ENCODE measurements at regions of chr12 and their contacts with region 1.

Region 1: DNA sequence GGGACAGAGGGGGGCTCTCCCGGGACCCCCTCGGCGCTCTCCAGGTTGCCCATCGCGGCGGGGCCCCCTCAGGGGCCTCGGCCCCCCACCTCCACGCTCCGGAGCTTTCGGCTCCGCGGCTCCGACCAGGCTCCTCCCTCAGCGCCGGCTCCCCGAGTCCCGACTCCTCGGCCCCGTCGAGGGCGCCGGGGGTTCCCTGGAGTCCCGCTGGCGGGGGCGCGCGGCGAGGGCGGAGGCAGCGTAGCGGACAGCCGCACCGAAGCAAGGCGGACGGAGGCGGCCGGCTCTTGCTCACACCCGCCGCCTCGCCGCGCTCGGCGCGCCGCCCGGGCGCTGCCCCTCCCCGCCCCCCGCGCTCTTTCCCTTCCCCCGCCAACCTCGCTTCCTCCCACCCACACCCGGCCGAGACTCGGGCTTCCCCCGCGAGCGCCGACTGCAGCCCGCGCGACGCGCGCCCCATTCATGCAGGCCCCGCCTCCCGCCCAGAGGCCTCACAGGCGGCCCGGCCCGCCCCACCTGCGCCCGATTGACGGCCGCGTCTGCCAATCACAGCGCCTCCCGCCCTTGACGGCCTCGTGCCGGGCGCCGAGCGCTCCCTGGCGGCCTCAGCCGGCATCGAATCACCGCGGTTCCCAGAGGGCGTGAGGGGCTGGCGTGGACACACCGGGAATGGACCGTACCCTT is at the start of gene FMNL3:
- DNase-seq: peak; percentile 95 to 100 (median 98)

Region 2: GRCh38 chr12:49644620-49644994 is 62.7 kb before region 1 on chr12:
- intact Hi-C with region 1: loop called (anchors 1 kb)
- DNase-seq: peak; percentile 64 to 97 (median 84)

Region 3: DNA sequence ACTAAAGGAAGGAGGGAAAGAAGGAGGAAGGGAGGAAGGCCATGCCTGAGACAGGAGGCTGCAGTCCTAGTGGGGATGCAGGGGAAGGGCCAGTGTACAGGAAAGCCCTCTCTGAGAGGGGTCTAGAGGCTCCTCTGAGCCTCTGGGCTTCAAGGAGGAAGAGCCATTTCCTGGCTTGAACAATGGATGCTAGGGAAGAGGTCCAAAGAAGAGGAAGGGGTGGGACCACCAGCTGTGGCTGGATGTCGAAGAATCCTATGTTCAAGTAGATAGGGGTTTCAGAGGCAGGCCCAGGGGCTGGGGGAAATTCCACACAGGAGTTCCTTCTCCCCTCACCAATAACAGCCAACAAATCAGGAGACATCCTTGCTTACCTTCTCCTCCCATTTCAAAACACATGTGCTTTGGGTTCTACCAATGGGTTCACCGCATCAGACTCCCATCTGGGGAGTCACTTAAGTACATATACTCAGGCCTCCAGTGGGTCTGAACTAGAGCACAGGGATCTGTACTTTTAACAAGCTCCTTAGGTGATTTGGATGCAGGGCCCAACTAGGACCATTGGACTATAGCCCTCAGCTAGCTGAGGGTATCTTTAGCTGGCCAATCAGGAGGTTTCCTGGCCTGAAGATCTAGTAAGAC is 51.6 kb before region 1 on chr12:
- intact Hi-C with region 1: no loop called
- DNase-seq: no peak

Region 4: DNA sequence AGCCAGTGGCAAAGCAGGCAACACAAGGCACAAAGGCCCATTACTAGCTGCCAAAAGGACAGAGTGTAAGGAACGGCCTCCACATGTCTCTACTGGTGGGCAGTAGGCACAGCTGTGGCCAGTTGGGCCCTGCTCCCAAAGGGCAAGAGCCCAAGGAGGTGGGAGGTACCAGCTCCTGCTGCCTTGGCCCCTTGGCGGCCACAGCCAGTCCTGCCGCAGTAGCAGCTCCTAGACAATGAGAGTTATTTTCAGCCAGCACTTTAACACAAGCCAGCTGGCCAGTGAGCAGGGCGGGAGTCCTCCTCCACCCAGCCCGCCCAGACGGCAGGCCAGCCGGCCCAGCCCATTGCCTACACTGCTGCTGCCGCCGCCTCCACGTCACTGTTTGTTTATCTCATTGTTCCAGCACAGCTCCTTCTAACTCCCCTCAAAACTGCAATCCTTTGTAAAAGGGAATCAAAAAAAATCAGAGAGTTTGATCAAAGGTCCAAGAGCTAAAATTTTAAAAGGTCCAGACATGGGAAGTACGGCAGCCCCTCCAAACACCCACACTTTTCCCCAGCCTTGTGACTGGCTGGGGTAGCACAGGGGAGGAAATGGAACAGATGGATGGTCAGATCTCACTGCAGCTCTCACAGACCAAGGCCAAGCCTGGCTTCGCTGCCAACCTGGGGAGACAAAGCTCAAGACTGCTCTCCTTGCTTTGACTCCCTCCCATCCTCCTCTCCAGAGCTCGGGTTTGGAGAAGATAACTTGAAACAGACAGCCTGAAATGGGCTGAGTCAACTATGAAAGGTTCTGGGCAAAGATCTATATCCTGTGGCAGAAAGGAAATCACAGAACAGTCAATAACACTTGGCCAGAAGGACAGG is 33.6 kb before region 1 on chr12:
- intact Hi-C with region 1: loop called (anchors 1 kb)
- DNase-seq: peak; percentile 90 to 99 (median 94)

Region 5: DNA sequence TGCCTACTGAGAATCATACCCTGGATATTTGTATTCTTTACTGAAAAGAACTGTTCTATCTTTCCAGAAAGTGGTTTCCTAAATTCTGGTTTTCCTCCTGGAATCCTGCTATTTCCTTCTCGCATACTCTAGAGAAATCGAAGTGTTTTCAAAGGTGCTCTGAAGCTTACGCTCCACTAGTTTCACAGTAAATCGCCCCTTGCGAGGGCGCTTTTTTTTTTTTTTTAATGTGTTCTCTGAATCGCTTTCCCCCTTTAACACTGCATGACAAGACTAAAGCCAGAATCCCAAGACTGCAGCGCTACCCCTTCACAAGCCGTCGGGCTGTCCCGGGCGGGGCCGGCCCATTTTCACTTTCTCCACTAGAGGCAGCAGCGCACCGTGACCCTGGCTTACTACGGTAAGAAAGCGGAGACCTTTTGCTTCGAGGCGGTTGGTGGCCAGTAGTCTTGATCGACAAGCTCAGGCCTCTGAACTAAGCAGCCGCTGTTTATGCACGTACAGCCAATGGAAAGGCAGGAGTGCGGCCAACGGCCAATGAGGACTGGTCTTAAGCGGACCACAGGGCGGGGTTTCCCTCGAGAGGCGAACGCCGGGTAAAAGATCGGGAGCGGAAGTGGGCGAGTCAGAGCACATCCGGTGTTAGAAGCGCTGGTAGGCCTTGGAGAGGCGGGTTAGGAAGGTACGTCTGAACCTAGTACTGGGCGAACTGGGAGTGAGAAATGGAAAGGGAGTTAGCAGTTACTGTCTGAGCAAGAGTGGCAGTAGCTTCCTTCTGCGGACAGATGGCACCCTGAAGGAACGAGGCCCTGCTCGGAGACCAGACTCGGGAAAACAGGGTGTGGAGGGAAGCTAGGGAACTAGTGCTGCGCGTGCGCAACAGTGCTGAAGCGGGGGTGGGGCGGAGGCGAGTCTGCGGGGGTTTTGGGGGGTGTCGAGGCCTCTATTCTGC is 33.9 kb after region 1 on chr12 and contains the start of gene TMBIM6:
- intact Hi-C with region 1: loop called (anchors 5 kb)
- DNase-seq: peak; percentile 98 to 100 (median 100)